Mammary epithelial cell (primary cell): ENCODE measurements at regions of chr2 and their contacts with region 1.

Region 1: DNA sequence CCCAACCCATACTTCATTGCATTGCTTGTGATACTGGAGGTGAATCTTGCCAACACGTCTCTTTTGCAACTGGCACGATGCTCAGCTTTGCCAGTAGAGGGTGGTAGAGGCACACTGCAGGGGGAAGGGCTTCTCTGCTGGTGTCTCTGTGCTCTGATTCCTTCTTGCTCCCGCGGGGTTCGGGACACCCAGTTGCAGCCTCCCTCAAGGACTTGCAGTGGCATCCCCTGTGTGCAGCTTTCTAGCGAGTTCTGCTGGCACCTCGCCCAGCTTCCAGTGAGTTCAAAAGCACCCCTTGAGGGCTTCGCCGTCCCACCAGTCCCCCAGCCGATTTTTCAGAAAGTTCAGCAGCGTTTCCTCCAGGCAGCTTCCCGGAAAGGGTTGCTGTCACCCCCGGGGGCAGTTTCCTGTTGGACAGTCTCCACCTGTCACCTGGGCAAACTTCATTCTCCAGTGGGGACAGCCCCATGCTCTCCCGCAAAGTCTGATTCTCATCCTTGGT is 35.3 kb upstream of the EN1 start:
- DNase-seq: peak; percentile 56
- H3K4me3 ChIP-seq: peak overlapping the region in 1 of 3 experiments; percentile 32
- H3K27ac ChIP-seq: no peak overlapping the region
- H3K4me1 ChIP-seq: peaks cover 10% of the 10 kb centered on the region
- H3K27me3 ChIP-seq: peaks cover 4% of the 10 kb centered on the region
- CTCF ChIP-seq: peak; percentile 100

Region 2: GRCh38 chr2:117603567-117603966 is 1279.2 kb before region 1 on chr2:
- CTCF ChIA-PET with region 1: no interaction called
- dilution Hi-C with region 1: no loop called
- in situ Hi-C with region 1: no loop called
- intact Hi-C with region 1: no loop called
- DNase-seq: no peak
- H3K4me3 ChIP-seq: no peak overlapping the region
- H3K27ac ChIP-seq: no peak overlapping the region
- H3K4me1 ChIP-seq: no peaks in the 10 kb centered on the region
- H3K27me3 ChIP-seq: no peaks in the 10 kb centered on the region
- CTCF ChIP-seq: no peak

Region 3: DNA sequence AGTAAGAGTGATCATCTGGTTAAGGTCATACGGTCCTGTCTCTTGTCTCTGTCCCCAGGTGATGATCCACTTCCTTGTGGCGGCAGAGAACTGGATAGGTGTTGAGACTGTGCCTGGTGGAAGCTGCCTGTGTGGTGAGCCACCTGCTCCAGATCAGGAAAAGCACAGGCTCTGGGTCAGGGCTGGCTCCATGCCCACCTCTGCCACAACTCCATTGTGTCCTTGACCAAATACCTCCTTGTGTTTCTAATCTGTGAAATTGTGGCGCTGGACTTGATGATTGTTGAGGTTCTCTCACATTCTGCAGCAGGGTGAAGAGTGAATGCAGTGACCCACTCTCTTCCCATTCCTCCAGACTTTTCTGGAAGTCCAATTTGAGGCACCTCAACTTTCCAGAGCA is 10.3 kb after region 1 on chr2:
- CTCF ChIA-PET with region 1: no interaction called
- dilution Hi-C with region 1: no loop called
- in situ Hi-C with region 1: no loop called
- intact Hi-C with region 1: no loop called
- DNase-seq: no peak
- H3K4me3 ChIP-seq: no peak overlapping the region
- H3K27ac ChIP-seq: no peak overlapping the region
- H3K4me1 ChIP-seq: no peaks in the 10 kb centered on the region
- H3K27me3 ChIP-seq: no peaks in the 10 kb centered on the region
- CTCF ChIP-seq: no peak

Region 4: GRCh38 chr2:118981632-118982031 is 98.9 kb after region 1 on chr2:
- CTCF ChIA-PET with region 1: no interaction called
- dilution Hi-C with region 1: loop called (anchors 5 kb)
- in situ Hi-C with region 1: no loop called
- intact Hi-C with region 1: no loop called
- DNase-seq: no peak
- H3K4me3 ChIP-seq: no peak overlapping the region
- H3K27ac ChIP-seq: no peak overlapping the region
- H3K4me1 ChIP-seq: no peaks in the 10 kb centered on the region
- H3K27me3 ChIP-seq: peaks cover 9% of the 10 kb centered on the region
- CTCF ChIP-seq: no peak

Region 5: DNA sequence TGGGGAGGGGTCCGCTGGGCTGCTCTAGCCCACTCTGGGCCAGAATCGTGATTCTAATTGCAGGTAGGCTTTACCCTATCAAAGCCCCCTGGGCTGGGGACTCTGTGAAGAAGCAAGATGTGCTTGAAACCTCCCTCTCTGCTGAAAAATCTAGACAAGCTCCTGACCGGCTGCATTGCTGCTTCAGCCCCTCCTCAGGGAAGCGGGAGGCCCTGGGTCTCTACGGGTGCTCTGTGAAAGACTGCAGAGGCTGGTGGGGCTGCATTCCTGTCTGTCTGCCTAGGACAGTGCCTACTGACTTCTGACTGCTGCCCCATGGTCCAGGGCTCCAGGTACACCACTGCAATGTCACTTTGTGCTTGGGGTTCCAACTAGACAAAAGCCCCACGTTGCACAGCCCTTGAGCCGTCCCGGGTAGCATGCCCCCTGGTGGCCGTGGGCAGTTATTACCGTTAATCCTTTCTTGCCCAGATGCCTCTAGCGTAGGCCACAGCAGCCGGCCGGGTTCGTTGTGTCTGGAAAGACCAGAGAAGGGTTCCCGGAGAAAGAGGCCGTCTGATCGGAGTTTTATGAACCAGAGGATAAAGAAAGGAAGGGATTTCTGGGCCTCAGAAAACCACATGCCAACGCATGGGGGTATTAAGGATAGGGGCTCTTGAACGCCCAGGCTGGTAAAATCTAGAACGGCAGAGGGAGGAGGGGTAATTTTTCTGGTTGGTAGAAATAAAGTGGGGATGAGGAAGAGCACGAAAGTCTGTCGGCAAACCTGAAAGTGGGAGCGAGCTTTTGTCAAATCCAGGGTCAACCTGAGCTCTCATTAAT is 291.7 kb after region 1 on chr2:
- CTCF ChIA-PET with region 1: interaction called, 3 read pairs
- dilution Hi-C with region 1: loop called (anchors 5 kb)
- in situ Hi-C with region 1: loop called (anchors 10 kb)
- intact Hi-C with region 1: loop called (anchors 1 kb)
- DNase-seq: peak; percentile 13
- H3K4me3 ChIP-seq: no peak overlapping the region
- H3K27ac ChIP-seq: no peak overlapping the region
- H3K4me1 ChIP-seq: peaks cover 11% of the 10 kb centered on the region
- H3K27me3 ChIP-seq: no peaks in the 10 kb centered on the region
- CTCF ChIP-seq: peak; percentile 82 to 84

Region 6: DNA sequence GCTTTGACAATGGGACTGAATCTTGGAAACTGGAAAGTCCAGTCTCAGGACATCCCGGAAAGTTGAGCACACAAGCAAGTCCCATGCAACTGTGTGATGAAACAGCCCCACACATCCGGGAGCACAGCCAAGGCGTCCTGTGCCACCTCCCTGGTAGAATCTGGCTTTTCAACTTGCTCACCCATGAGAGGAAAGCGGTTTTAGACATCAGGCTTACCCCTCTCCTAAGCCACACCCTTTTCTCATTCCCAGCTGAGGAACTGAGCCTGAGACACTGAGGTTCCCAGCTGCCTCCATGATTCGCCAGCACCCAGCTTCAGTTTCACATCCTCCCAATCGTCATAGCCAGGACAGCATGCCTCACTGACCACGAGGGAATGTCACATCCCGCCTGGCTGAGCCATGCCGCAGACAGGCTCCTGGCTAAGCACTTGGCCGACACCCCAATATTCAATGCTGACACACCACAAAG is 401.1 kb after region 1 on chr2:
- CTCF ChIA-PET with region 1: no interaction called
- dilution Hi-C with region 1: no loop called
- in situ Hi-C with region 1: loop called in 1 of 2 experiments (anchors 10 kb)
- intact Hi-C with region 1: no loop called
- DNase-seq: peak; percentile 95
- H3K4me3 ChIP-seq: peak overlapping the region in 1 of 3 experiments; percentile 6
- H3K27ac ChIP-seq: peak overlapping the region; percentile 57
- H3K4me1 ChIP-seq: peaks cover 14% of the 10 kb centered on the region
- H3K27me3 ChIP-seq: no peaks in the 10 kb centered on the region
- CTCF ChIP-seq: no peak

Region 7: GRCh38 chr2:119476301-119477021 is 593.7 kb after region 1 on chr2:
- CTCF ChIA-PET with region 1: no interaction called
- dilution Hi-C with region 1: no loop called
- in situ Hi-C with region 1: loop called (anchors 10 to 25 kb)
- intact Hi-C with region 1: loop called (anchors 5 kb)
- DNase-seq: peak; percentile 39
- H3K4me3 ChIP-seq: no peak overlapping the region
- H3K27ac ChIP-seq: no peak overlapping the region
- H3K4me1 ChIP-seq: no peaks in the 10 kb centered on the region
- H3K27me3 ChIP-seq: no peaks in the 10 kb centered on the region
- CTCF ChIP-seq: peak; percentile 81 to 96